ENCODE measurements at regions of chr14 and their contacts with region 1.

Region 1: GRCh38 chr14:64830961-64831360 is 48.7 kb downstream of the SPTB start:
- DNase-seq: no peak
- H3K4me3 ChIP-seq: no peak overlapping the region
- H3K27me3 ChIP-seq: peaks cover 3% of the 10 kb centered on the region; the same call in 1 of the 2 replicates
- CTCF ChIP-seq: no peak

Region 2: GRCh38 chr14:64841121-64841651 is 10.2 kb after region 1 on chr14:
- CTCF ChIA-PET with region 1: interaction called, 11 read pairs
- POLR2A ChIA-PET with region 1: no interaction called
- DNase-seq: peak; percentile 25
- H3K4me3 ChIP-seq: no peak overlapping the region
- H3K27me3 ChIP-seq: peaks cover 11% of the 10 kb centered on the region
- CTCF ChIP-seq: peak; percentile 60

Region 3: GRCh38 chr14:65080960-65081747 is 250.2 kb after region 1 on chr14:
- CTCF ChIA-PET with region 1: no interaction called
- POLR2A ChIA-PET with region 1: no interaction called
- DNase-seq: no peak
- H3K4me3 ChIP-seq: no peak overlapping the region
- H3K27me3 ChIP-seq: no peaks in the 10 kb centered on the region
- CTCF ChIP-seq: no peak

Measured in BJ (cell line).